Activated CD8-positive, alpha-beta T cell treated with anti-CD3 and anti-CD28 coated beads, Interleukin-2, amount 10 ng/mL, durations not matched to agents 7 days and 5 days (primary cell): ENCODE measurements at regions of chr13 and their contacts with region 1.

Region 1: GRCh38 chr13:46211483-46212351 is at the start of gene LRRC63:
- DNase-seq: peak; percentile 90
- ATAC-seq: peak; percentile 99
- H3K4me3 Mint-ChIP-seq: peak within 1 kb of the TSS; percentile 88
- H3K27ac Mint-ChIP-seq: peak within 1 kb of the TSS; percentile 93
- H3K4me1 Mint-ChIP-seq: peaks cover 41% of the 10 kb centered on the region
- H3K27me3 Mint-ChIP-seq: no peaks in the 10 kb centered on the region
- total RNA-seq, gene LRRC63: 1.7 to 2.2 TPM

Region 2: GRCh38 chr13:46176756-46177155 is 35.0 kb before region 1 on chr13:
- CTCF ChIA-PET with region 1: interaction called, 12 read pairs
- POLR2A ChIA-PET with region 1: interaction called, 20 read pairs
- DNase-seq: peak; percentile 56
- ATAC-seq: no peak
- H3K4me3 Mint-ChIP-seq: peak overlapping the region; percentile 90
- H3K27ac Mint-ChIP-seq: peak overlapping the region; percentile 83
- H3K4me1 Mint-ChIP-seq: peaks cover 54% of the 10 kb centered on the region
- H3K27me3 Mint-ChIP-seq: no peaks in the 10 kb centered on the region